AG04450 (cell line): ENCODE measurements at regions of chr14 and their contacts with region 1.

Region 1: GRCh38 chr14:49852301-49853157 is at the start of gene NEMF:
- DNase-seq: peak; percentile 69
- H3K4me3 ChIP-seq: peak within 1 kb of the TSS; percentile 99
- H3K27ac ChIP-seq: peak within 1 kb of the TSS; percentile 79
- H3K27me3 ChIP-seq: no peaks in the 10 kb centered on the region
- CTCF ChIP-seq: peak; percentile 84
- polyA plus RNA-seq, gene NEMF: 39.8 and 48.6 TPM in 2 replicates

Region 2: DNA sequence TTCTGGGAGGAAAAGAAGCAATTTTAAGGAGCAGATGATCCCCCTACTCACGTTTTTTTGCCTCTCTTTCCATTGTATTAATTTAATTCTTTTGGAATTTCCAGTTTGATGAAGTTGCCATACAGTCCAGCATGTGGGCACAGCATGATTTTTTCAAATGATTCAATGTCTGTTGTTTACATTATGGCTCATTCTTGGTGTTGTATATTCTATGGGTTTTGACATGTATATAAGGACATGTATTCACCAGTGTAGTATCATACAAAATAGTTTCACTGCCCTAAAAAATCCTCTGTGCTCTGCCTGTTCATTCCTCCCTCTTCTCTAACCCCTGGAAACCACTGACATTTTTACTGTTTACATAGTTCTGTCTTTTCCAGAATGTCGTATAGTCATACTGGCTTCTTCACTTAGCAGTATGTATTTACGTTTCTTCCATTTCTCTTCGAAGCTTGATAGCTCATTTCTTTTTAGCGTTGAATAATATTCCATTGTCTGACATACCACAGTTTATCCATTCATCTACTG is 97.9 kb before region 1 on chr14:
- CTCF ChIA-PET with region 1: no interaction called
- POLR2A ChIA-PET with region 1: no interaction called
- DNase-seq: no peak
- H3K4me3 ChIP-seq: no peak overlapping the region
- H3K27ac ChIP-seq: no peak overlapping the region
- H3K27me3 ChIP-seq: no peaks in the 10 kb centered on the region
- CTCF ChIP-seq: no peak

Region 3: GRCh38 chr14:49908432-49908781 is 55.9 kb after region 1 on chr14:
- CTCF ChIA-PET with region 1: interaction called, 10 read pairs
- POLR2A ChIA-PET with region 1: no interaction called
- DNase-seq: no peak
- H3K4me3 ChIP-seq: no peak overlapping the region
- H3K27ac ChIP-seq: no peak overlapping the region
- H3K27me3 ChIP-seq: no peaks in the 10 kb centered on the region
- CTCF ChIP-seq: no peak

Region 4: GRCh38 chr14:49920935-49921334 is 68.4 kb after region 1 on chr14:
- CTCF ChIA-PET with region 1: no interaction called
- POLR2A ChIA-PET with region 1: no interaction called
- DNase-seq: no peak
- H3K4me3 ChIP-seq: no peak overlapping the region
- H3K27ac ChIP-seq: no peak overlapping the region
- H3K27me3 ChIP-seq: no peaks in the 10 kb centered on the region
- CTCF ChIP-seq: no peak

Region 5: GRCh38 chr14:50109342-50109741 is 256.8 kb after region 1 on chr14:
- CTCF ChIA-PET with region 1: interaction called, 41 read pairs
- POLR2A ChIA-PET with region 1: interaction called, 5 read pairs
- DNase-seq: peak; percentile 10
- H3K4me3 ChIP-seq: no peak overlapping the region
- H3K27ac ChIP-seq: no peak overlapping the region
- H3K27me3 ChIP-seq: no peaks in the 10 kb centered on the region
- CTCF ChIP-seq: peak; percentile 52

Region 6: DNA sequence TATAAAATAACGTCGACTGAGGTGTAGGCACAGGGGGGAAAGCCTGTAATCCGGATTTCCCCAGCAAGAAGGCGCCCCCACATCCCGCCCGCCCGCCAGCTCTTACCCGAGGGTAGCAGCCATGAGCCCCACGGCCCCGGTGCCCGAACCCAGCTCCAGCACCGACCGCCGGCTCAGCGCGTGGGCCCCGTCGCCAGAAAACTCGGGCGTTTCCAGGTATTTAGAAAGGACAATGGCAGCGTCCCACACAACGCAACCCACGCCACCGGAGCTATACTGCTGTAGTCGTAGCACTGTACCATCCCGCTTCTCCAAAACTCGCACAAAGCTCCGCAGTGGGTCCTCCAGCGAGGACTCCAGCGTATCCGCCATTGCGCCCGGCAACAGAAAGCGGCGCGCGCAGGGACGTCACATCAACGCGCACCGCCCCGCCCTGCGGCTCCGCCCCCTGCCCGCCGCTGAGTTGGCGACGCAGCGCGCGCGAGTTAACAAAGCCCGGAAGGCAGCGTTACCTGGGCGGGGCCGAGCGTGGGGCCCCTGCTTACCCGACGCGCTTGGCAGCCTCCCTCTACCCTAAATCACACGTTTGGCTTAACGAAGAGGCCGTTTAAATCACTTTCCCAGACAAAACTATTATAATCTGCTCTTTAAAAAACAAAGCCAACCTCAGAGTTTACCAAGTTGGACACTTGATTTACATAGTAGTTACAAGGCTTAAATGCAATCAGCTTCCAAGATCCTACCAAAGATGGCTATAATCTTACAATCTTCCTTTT is 263.8 kb after region 1 on chr14 and contains the start of gene VCPKMT:
- CTCF ChIA-PET with region 1: interaction called, 26 read pairs
- POLR2A ChIA-PET with region 1: interaction called, 4 read pairs
- DNase-seq: peak; percentile 44
- H3K4me3 ChIP-seq: peak within 1 kb of the TSS; percentile 89
- H3K27ac ChIP-seq: peak within 1 kb of the TSS; percentile 41
- H3K27me3 ChIP-seq: no peaks in the 10 kb centered on the region
- CTCF ChIP-seq: no peak
- polyA plus RNA-seq, gene VCPKMT: 5.1 and 7.7 TPM in 2 replicates